Colonic mucosa (tissue), 4 donors: ENCODE measurements at regions of chr9 and their contacts with region 1.

Region 1: GRCh38 chr9:94805585-94805984 is 79.1 kb downstream of the AOPEP start:
- DNase-seq: peak; percentile 67
- H3K4me3 ChIP-seq: no peak overlapping the region
- H3K27ac ChIP-seq: peak overlapping the region; percentile 63
- H3K4me1 ChIP-seq: peaks cover 4% of the 10 kb centered on the region
- H3K27me3 ChIP-seq: no peaks in the 10 kb centered on the region
- CTCF ChIP-seq: no peak

Region 2: GRCh38 chr9:94903961-94904421 is 98.4 kb after region 1 on chr9:
- intact Hi-C with region 1: no loop called
- DNase-seq: no peak
- H3K4me3 ChIP-seq: no peak overlapping the region
- H3K27ac ChIP-seq: no peak overlapping the region
- H3K4me1 ChIP-seq: no peaks in the 10 kb centered on the region
- H3K27me3 ChIP-seq: no peaks in the 10 kb centered on the region
- CTCF ChIP-seq: no peak

Region 3: GRCh38 chr9:94917840-94918753 is 112.5 kb after region 1 on chr9:
- intact Hi-C with region 1: loop called (anchors 10 kb)
- DNase-seq: no peak
- H3K4me3 ChIP-seq: no peak overlapping the region
- H3K27ac ChIP-seq: no peak overlapping the region
- H3K4me1 ChIP-seq: peaks cover 7% of the 10 kb centered on the region
- H3K27me3 ChIP-seq: no peaks in the 10 kb centered on the region
- CTCF ChIP-seq: no peak